ENCODE measurements at regions of chr20 and their contacts with region 1.

Region 1: DNA sequence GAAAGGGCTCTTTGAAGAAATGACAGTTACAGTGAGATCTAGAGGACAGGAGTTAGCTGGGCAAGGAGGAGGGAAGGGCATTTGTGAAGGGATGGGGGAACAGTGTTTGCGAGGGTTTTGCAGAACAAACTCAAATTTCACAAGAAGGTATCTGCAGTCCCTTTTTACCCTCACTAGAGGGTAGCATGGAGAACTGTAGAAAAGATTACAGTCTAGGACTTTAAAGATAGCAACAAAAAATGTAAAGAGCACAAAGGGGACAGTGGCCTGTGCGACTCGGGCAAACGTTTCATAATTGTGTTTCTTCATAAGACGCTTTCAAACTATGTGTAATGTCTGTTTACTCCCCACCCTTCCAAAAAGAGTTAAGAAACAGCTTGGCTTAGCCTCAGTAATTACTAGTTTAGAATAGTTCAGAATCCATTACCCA is 21.2 kb upstream of the ASXL1 start:
- DNase-seq: no peak
- ATAC-seq: peak; percentile 64
- H3K4me3 Mint-ChIP-seq: no peak overlapping the region
- H3K27ac Mint-ChIP-seq: peak overlapping the region; percentile 66
- H3K4me1 Mint-ChIP-seq: peaks cover 47% of the 10 kb centered on the region
- H3K27me3 Mint-ChIP-seq: no peaks in the 10 kb centered on the region
- CTCF ChIP-seq: peak; percentile 55

Region 2: DNA sequence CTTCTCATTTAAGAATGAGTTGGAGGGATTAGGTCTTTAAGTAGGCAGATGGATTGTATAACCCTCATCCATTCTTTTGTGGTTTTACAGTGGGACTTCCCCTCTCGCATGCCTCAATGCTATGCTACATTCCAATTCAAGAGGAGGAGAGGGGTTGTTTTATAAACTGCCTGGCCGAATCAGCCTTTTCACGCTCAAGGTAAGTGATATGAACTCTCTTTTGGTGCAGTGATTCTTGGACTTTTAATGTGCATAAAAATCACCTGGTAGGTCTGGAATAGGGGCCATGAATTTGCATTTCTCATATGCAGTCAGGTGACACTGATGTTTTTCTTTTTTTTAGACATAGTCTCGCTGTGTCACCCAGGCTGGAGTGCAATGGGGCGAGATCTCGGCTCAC is 32.0 kb after region 1 on chr20:
- CTCF ChIA-PET with region 1: interaction called, 3 read pairs
- POLR2A ChIA-PET with region 1: interaction called, 3 read pairs
- intact Hi-C with region 1: loop called (anchors 1 kb)
- DNase-seq: no peak
- ATAC-seq: peak; percentile 76
- H3K4me3 Mint-ChIP-seq: peak overlapping the region; percentile 52
- H3K27ac Mint-ChIP-seq: peak overlapping the region; percentile 70
- H3K4me1 Mint-ChIP-seq: peaks cover 54% of the 10 kb centered on the region
- H3K27me3 Mint-ChIP-seq: no peaks in the 10 kb centered on the region
- CTCF ChIP-seq: no peak

Region 3: DNA sequence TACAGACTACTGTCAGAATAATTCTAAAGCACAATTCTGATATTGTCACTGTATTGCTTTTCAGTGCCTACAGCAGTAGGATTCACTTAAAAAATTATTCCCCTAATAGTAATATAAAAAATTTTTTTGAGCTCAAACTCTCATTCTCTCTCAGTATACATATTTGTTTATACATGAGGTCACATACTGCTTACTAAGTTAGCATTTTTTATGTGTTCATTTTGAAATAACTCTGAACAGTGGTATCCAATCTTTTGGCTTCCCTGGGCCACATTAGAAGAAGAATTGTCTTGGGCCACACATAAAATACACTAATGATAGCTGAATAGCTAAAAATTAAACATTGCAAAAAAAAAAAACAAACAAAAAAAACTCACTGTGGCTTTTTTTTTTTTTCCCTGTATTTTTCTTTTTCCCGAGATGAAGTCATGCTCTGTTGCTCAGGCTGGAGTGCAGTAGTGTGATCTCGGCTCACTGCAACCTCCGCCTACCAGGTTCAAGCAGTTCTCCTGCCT is 59.8 kb after region 1 on chr20:
- CTCF ChIA-PET with region 1: no interaction called
- POLR2A ChIA-PET with region 1: no interaction called
- intact Hi-C with region 1: no loop called
- DNase-seq: no peak
- ATAC-seq: no peak
- H3K4me3 Mint-ChIP-seq: no peak overlapping the region
- H3K27ac Mint-ChIP-seq: no peak overlapping the region
- H3K4me1 Mint-ChIP-seq: peaks cover 23% of the 10 kb centered on the region
- H3K27me3 Mint-ChIP-seq: no peaks in the 10 kb centered on the region
- CTCF ChIP-seq: no peak

Region 4: DNA sequence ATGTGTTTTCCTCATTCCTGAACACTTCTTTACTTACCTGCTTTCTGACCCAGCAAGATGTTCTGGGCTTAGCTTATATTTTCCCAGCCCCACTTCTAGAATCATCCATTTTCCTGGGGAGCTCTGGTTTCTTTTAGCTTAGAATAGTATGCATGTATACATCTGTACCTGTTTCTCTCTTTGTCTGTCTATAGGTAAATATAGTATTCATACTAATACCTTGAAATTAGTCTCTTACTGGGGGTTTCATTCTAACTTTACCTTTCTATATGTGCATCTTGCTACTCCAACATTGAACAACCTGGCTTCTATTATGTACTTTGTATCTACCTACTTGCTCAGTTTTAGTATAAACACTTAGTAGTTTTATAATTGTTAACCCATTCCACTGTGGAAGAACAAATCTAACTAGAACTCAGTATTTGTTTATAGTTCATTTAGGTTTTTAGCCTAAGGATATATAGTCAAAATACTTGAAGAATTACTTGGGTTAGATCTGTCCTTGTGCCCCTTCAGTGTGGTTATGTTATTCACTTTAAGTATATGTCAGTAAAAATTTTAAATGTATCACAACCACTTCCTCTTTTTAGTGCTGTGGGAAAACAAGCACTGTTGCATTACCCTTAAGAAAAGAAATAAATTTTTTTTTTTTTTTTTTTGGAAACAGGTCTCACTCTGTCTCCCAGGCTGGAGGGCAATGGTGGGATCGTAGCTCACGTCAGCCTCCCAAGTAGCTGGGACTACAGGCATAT is 75.2 kb after region 1 on chr20:
- CTCF ChIA-PET with region 1: no interaction called
- POLR2A ChIA-PET with region 1: no interaction called
- intact Hi-C with region 1: loop called (anchors 2 kb)
- DNase-seq: no peak
- ATAC-seq: peak; percentile 80
- H3K4me3 Mint-ChIP-seq: peak overlapping the region; percentile 57
- H3K27ac Mint-ChIP-seq: peak overlapping the region; percentile 42
- H3K4me1 Mint-ChIP-seq: peaks cover 57% of the 10 kb centered on the region
- H3K27me3 Mint-ChIP-seq: no peaks in the 10 kb centered on the region
- CTCF ChIP-seq: no peak

Region 5: GRCh38 chr20:32437391-32438074 is 100.6 kb after region 1 on chr20:
- CTCF ChIA-PET with region 1: no interaction called
- POLR2A ChIA-PET with region 1: no interaction called
- intact Hi-C with region 1: loop called (anchors 5 kb)
- DNase-seq: no peak
- ATAC-seq: peak; percentile 62
- H3K4me3 Mint-ChIP-seq: no peak overlapping the region
- H3K27ac Mint-ChIP-seq: no peak overlapping the region
- H3K4me1 Mint-ChIP-seq: peaks cover 3% of the 10 kb centered on the region
- H3K27me3 Mint-ChIP-seq: no peaks in the 10 kb centered on the region
- CTCF ChIP-seq: no peak

Region 6: GRCh38 chr20:32456869-32457478 is 120.0 kb after region 1 on chr20:
- CTCF ChIA-PET with region 1: interaction called, 3 read pairs
- POLR2A ChIA-PET with region 1: no interaction called
- intact Hi-C with region 1: loop called (anchors 1 kb)
- DNase-seq: peak; percentile 52
- ATAC-seq: peak; percentile 66
- H3K4me3 Mint-ChIP-seq: no peak overlapping the region
- H3K27ac Mint-ChIP-seq: no peak overlapping the region
- H3K4me1 Mint-ChIP-seq: peaks cover 13% of the 10 kb centered on the region
- H3K27me3 Mint-ChIP-seq: no peaks in the 10 kb centered on the region
- CTCF ChIP-seq: no peak

Region 7: DNA sequence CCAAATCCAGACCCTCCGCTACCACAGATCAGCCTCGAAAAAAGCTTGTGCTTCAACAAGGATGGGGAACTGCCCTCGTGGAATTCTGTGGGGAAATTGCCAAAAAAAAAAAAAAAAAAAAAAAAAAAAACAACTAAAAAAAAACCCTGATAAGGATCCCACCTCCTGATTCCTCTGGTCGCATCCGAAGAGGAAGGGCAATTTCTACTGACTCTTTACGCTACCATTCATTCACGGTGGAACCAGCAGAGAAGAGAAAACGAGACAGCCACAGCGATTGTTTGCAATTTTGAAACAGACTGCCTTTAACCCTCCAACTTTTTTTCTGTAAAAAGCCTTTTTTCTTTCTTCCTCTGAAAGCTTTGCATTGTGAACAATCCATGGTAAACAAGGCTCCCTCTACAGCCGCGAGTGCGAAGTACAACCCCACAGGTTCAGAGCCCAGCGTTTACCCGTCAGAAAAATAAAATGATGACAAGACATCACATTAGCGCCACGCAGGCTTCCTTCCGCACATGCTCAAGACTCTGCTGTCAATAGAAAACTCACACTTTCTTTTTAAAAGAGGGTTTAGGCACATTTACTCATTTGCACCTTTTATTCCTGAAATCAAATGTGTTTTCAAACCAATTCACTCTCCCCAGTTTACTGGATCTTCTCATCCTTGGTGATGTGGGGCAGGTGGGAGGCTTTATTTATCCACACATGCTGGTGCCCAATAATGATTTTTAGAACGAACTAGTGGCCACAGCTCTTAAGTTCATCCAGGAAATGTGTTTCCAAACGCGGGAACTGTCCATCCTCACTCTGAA is 148.2 kb after region 1 on chr20:
- CTCF ChIA-PET with region 1: no interaction called
- POLR2A ChIA-PET with region 1: no interaction called
- intact Hi-C with region 1: loop called (anchors 2 kb)
- DNase-seq: no peak
- ATAC-seq: peak; percentile 80
- H3K4me3 Mint-ChIP-seq: peak overlapping the region; percentile 86
- H3K27ac Mint-ChIP-seq: peak overlapping the region; percentile 69
- H3K4me1 Mint-ChIP-seq: peaks cover 14% of the 10 kb centered on the region
- H3K27me3 Mint-ChIP-seq: no peaks in the 10 kb centered on the region
- CTCF ChIP-seq: peak; percentile 82